AG04449 (cell line): ENCODE measurements at regions of chr7 and their contacts with region 1.

Region 1: GRCh38 chr7:33757562-33758165 is 147.7 kb upstream of the BMPER start:
- DNase-seq: no peak
- H3K4me3 ChIP-seq: no peak overlapping the region
- CTCF ChIP-seq: peak; percentile 26

Region 2: DNA sequence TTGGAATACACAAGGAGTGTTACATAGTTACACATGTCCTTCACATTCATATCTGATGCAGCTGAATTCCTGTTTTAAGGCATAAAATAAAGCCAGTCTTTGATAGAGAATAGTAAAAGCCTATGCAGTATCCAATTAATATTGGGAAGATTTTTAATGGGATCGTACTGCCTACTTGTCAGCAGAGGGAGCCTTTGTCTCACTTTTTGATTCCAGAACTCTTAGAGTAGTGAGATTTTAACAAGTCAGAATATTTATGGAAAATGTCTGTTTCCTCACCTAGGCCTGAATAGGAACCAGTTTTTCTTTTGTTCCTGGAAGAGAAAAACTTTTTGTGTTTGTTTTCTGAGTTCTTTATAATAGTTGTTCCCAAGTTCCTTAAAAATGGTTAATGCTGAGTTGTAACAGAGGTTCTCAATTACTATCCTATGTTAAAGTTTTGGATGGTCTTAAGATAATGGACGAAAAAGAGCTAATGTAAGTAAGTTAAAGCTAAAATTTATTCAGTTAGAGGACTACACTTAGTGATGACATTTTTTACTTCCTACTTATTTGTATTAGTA is 514.3 kb before region 1 on chr7:
- CTCF ChIA-PET with region 1: interaction called, 10 read pairs
- POLR2A ChIA-PET with region 1: no interaction called
- DNase-seq: no peak
- H3K4me3 ChIP-seq: no peak overlapping the region
- CTCF ChIP-seq: peak; percentile 46

Region 3: DNA sequence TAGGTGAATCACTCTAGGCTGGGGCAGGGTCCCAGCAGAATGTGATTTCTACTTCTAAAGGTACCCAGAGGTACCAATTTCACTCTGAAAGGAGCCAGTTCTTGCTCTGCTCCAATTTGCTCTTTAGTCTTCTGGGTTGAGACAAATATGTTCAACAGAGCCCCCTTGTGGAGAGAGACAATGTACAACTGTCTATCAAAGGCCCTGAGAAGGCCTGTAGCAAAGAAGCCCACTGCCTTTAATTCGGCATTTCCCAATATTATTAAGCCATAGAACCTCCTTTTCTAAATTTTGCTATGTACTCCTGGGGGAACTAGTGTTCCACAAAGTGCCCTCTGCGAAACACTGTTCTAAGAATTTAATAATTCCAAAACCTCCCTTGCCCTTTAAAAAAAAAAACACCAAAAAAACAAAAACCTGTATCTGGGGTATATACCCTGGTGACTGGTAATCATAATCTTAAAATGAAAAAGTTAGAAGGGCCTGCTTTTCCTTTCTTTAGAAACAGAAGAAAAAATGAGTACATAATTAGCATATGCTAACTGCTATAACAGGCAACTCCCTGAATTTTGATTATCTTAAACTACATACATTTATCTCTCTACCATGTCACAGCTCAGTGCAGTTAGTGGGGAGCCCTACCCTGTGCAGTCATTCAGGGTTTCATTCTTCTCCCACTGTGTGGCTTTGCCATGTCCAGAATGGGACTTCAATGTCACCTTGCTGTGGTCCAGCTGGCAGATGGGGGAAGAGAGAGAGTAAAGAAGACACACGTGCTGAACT is 13.2 kb before region 1 on chr7:
- CTCF ChIA-PET with region 1: interaction called, 23 read pairs
- POLR2A ChIA-PET with region 1: no interaction called
- DNase-seq: no peak
- H3K4me3 ChIP-seq: no peak overlapping the region
- CTCF ChIP-seq: no peak

Region 4: DNA sequence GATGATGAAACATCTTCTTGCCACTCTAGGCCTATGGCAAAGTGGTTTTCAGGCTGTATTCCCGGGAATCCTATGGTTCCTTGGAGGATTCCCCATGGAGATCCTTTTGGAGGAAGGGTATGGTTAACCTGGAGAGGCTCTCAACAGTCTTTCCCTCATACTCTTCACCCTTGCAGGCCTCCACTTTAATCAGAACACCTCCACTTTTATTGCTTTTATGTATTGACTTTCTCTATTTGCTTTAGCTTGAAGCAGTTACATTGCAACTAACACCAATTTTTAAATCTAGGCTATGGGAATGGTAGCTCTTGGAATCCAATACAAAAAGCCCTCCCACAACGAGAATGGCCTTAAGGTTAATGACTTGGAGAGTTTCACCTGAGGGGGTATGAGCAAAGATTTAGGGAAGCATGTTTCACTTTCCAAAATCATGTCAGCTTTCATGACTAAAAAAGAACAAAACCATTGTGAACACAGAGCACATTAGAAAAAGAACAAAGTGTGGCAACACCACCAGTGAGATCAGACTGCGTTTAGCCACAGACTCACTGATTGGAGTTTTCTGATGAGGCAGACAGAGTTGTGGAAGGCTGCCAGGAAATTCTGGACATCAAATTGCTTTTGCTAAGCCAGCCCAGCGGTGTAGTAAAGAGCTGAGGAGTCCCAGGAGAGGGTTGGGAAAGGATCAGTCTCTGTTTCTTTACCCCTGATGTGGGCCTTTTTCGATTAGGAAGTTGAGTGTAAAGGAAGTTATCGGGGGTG is 17.3 kb after region 1 on chr7:
- CTCF ChIA-PET with region 1: interaction called, 19 read pairs
- POLR2A ChIA-PET with region 1: no interaction called
- DNase-seq: no peak
- H3K4me3 ChIP-seq: no peak overlapping the region
- CTCF ChIP-seq: no peak

Region 5: GRCh38 chr7:33904681-33905388 is 147.2 kb after region 1 on chr7:
- CTCF ChIA-PET with region 1: interaction called, 17 read pairs
- POLR2A ChIA-PET with region 1: no interaction called
- DNase-seq: no peak
- H3K4me3 ChIP-seq: peak overlapping the region; percentile 68
- CTCF ChIP-seq: peak; percentile 47